K562 (cell line): ENCODE measurements at regions of chr14 and their contacts with region 1.

Region 1: GRCh38 chr14:102316743-102317563 is 2.6 kb upstream of the ZNF839 start:
- DNase-seq: peak; percentile 83 to 91 (median 86)
- ATAC-seq: peak; percentile 85
- H3K4me3 ChIP-seq: peak overlapping the region; percentile 54
- H3K27ac ChIP-seq: peak overlapping the region; percentile 77
- H3K4me1 ChIP-seq: peaks cover 27 to 32% of the 10 kb centered on the region in 2 experiments; a peak in 4 of 5 replicates
- H3K27me3 ChIP-seq: no peaks in the 10 kb centered on the region
- CTCF ChIP-seq: peak; percentile 66 to 71 (median 68)
- EP300 ChIP-seq: peak; percentile 18; the same call in 1 of the 2 replicates
- POLR2A ChIP-seq: no peak
- RAD21 ChIP-seq: no peak

Region 2: GRCh38 chr14:101964297-101965144 is 352.4 kb before region 1 on chr14 and contains the start of gene DYNC1H1:
- CTCF ChIA-PET with region 1: no interaction called
- POLR2A ChIA-PET with region 1: no interaction called
- in situ Hi-C with region 1: loop called (anchors 5 kb)
- intact Hi-C with region 1: loop called (anchors 5 kb)
- DNase-seq: peak; percentile 88 to 93 (median 88)
- ATAC-seq: peak; percentile 87
- H3K4me3 ChIP-seq: peak within 1 kb of the TSS; percentile 96
- H3K27ac ChIP-seq: peak within 1 kb of the TSS; percentile 76
- H3K4me1 ChIP-seq: peaks cover 34 to 39% of the 10 kb centered on the region in 2 experiments
- H3K27me3 ChIP-seq: no peaks in the 10 kb centered on the region
- CTCF ChIP-seq: no peak
- EP300 ChIP-seq: no peak
- POLR2A ChIP-seq: peak; percentile 89
- RAD21 ChIP-seq: no peak
- polyA plus RNA-seq, gene DYNC1H1: 31.9 to 35.9 TPM

Region 3: GRCh38 chr14:102096214-102097114 is 220.5 kb before region 1 on chr14:
- CTCF ChIA-PET with region 1: interaction called, 3 read pairs
- POLR2A ChIA-PET with region 1: no interaction called
- in situ Hi-C with region 1: no loop called
- intact Hi-C with region 1: loop called (anchors 5 kb)
- DNase-seq: peak; percentile 48 to 86 (median 60)
- ATAC-seq: peak; percentile 81
- H3K4me3 ChIP-seq: no peak overlapping the region
- H3K27ac ChIP-seq: peak overlapping the region; percentile 70; the same call in 2 of the 3 replicates
- H3K4me1 ChIP-seq: peaks cover 27 to 31% of the 10 kb centered on the region in 2 experiments
- H3K27me3 ChIP-seq: no peaks in the 10 kb centered on the region
- CTCF ChIP-seq: peak; percentile 79 to 90 (median 87)
- EP300 ChIP-seq: no peak
- POLR2A ChIP-seq: no peak
- RAD21 ChIP-seq: peak; percentile 75 to 84

Region 4: DNA sequence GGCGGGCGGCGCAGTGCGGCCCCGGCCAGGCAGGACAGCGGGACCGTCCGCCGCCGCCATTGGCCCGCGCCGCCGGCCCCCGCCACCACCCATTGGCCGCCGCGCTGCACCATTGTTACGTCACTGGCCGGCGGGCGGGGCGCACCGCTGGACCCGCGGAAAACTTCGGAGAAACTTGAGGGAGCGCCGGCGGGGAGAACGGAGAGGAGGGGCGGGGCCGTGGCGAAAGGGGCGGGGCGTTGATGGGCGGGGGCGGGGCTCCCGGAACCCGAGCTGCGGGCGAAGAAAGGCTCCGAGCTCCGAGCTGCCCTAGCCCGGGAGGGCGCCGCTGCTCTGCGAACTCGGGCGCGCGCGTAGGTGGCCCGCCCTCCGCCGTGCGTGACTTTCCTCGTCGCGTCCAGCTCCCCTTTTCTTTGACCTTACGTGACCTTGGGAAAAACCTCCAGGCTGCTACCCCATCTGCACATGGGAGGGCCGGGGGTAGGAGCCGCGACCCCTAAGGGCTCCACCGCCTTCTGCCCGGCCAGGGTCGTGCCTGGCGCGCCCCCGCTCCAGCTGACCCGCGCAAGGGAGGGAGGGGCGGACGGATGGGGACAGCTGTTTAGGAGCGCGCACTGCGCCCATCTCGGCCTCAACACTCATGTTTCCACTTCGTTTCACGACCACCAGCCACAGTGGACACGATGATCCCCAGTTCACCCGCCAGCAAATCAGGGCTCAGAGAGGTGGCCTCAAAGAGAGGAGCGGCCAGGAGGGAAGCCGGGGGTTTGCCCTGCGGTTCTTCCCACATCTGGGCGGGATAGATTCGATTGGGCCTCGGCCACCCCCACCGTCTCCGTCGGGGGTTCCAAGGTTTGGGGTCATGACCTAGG is 193.0 kb after region 1 on chr14 and contains the start of gene ANKRD9:
- CTCF ChIA-PET with region 1: no interaction called
- POLR2A ChIA-PET with region 1: no interaction called
- in situ Hi-C with region 1: loop called (anchors 10 kb)
- intact Hi-C with region 1: loop called (anchors 5 kb)
- DNase-seq: peak; percentile 87 to 95 (median 90)
- ATAC-seq: peak; percentile 83
- H3K4me3 ChIP-seq: peak within 1 kb of the TSS; percentile 68
- H3K27ac ChIP-seq: peak within 1 kb of the TSS; percentile 93
- H3K4me1 ChIP-seq: peaks cover 8 to 66% of the 10 kb centered on the region in 2 experiments; a peak in 4 of 5 replicates
- H3K27me3 ChIP-seq: no peaks in the 10 kb centered on the region
- CTCF ChIP-seq: no peak
- EP300 ChIP-seq: no peak
- POLR2A ChIP-seq: no peak
- RAD21 ChIP-seq: no peak
- polyA plus RNA-seq, gene ANKRD9: 0.04 to 0.06 TPM